Head of caudate nucleus (tissue), 42 donors: ENCODE measurements at regions of chr3 and their contacts with region 1.

Region 1: DNA sequence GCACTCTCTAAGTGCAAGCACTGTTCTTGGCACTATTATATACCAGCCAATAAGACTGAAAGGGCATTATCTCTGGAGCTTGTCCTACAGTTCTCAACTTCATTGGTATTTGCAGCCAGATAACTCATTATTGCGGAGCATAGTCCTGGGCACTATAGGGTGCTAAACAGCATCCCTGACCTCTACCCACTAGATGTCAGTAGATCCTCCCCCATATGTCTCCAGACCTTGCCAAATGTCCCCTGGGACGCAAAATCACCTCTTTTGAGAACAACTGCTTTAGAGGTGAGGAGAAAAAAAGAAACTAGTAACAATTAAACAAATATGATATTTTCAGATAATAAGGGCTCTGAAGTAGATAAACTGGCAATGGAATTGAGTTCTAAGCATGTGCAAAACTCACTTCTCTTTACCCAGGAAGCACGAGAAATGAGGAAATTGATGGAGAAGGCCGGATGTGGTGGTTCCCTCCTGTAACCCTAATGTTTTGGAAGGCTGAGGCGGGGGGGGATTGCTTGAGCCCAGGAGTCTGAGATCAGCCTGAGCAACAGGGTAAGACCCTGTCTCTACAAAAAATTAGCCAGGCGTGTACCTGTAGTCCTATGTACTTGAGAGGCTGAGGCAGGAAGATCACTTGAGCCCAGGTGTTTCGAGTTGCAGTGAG is 61.4 kb downstream of the FRMD4B start:
- DNase-seq: peak in 9 of 42 donors; percentile 11 to 74 (median 37)

Region 2: DNA sequence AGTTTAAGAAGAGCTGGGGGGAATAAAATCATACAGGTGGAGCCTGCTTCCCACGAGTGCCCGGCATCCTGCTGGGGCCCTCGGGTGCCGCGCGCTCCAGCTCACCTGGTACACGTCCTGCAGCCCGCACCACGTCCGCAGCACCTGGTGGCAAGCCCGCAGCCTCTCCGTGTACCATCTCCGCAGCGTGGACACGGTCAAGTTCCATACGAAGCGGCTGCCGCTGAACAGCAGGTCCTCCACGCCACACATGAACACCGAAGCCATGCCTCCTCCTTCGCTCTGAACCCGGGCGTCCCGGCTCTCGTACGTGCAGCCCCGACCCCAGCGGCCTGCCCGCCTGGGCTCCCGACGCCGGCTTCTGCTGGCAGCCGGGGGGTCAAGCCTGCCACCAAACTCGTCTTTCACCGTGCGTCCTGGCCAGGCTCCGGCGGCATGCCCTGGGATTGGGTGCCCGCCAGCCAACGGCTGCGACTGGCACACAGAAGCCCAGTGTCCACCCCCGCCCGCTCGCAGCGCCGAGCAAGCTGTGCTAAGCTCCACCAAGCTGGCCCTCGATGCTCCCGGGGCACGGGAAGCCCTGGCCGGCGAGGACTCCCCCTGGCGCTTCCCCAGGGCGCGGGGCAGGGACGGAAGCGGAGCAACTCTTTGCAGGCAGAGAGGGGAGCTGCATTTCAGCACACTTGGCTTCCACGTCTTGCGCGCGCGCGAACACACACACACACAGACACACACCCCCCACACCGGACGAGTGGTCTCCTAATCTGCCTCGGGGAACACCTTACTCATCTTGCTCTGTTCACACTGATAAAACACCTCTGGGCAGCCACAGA is 61.4 kb after region 1 on chr3 and contains the start of gene FRMD4B:
- intact Hi-C with region 1: loop called (anchors 5 kb)
- DNase-seq: peak; percentile 86 to 97 (median 94)

Region 3: DNA sequence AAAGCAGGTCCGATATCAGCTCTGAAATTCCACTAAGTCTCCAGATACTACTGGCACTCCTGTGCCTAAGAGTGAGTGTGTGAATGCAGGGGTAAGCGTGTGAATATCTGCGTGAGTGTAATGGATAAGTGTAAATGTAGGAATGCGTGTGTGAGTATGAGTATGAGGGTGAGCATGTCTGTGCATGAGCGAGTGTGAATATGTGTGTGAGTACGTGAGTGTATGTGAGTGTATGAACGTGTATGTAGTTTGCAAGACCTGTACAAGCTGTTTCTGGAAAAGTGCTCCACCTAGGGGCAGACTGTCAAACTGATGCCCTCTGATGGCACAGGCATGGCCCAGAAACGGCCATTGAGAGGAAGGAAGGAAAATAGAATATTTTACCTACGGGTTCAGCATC is 85.8 kb after region 1 on chr3:
- intact Hi-C with region 1: no loop called
- DNase-seq: peak; percentile 41 to 94 (median 82)

Region 4: DNA sequence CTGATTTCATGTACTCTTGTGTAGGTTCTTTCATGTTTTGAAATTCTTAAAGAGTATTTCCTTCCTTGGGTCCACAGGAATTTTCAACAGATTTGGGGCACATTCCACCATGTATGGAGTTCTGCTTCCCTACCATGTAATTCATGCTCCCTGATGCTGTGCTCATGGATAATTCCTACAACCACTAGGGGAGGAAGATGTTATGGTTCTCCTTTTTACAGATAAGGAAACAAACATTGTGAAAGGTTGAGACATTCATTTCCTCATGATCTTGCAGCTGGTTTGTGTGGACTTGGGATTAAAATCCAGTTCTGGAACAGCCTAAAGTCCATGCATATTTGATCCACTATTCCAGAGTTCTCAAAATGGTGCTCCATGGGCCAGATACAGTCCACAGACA is 236.3 kb after region 1 on chr3:
- intact Hi-C with region 1: no loop called
- DNase-seq: no peak